CD8-positive, alpha-beta T cell (primary cell): ENCODE measurements at regions of chr5 and their contacts with region 1.

Region 1: GRCh38 chr5:41869739-41870626 is at the start of gene OXCT1:
- DNase-seq: peak; percentile 87 to 97 (median 93)
- ATAC-seq: peak; percentile 94
- H3K4me3 ChIP-seq: peak within 1 kb of the TSS; percentile 90 to 98
- H3K4me3 Mint-ChIP-seq: peak within 1 kb of the TSS; percentile 92
- H3K27ac ChIP-seq: peak within 1 kb of the TSS; percentile 87 to 90
- H3K27ac Mint-ChIP-seq: peak within 1 kb of the TSS; percentile 98
- H3K4me1 ChIP-seq: peaks cover 24% of the 10 kb centered on the region
- H3K4me1 Mint-ChIP-seq: peaks cover 48% of the 10 kb centered on the region
- H3K27me3 ChIP-seq: no peaks in the 10 kb centered on the region
- H3K27me3 Mint-ChIP-seq: no peaks in the 10 kb centered on the region
- CTCF ChIP-seq: no peak
- total RNA-seq, gene OXCT1: 16.1 to 19.8 TPM

Region 2: GRCh38 chr5:41896230-41896629 is 26.2 kb after region 1 on chr5:
- CTCF ChIA-PET with region 1: no interaction called
- POLR2A ChIA-PET with region 1: no interaction called
- intact Hi-C with region 1: no loop called
- DNase-seq: no peak
- ATAC-seq: no peak
- H3K4me3 ChIP-seq: no peak overlapping the region
- H3K4me3 Mint-ChIP-seq: no peak overlapping the region
- H3K27ac ChIP-seq: no peak overlapping the region
- H3K27ac Mint-ChIP-seq: no peak overlapping the region
- H3K4me1 ChIP-seq: no peaks in the 10 kb centered on the region
- H3K4me1 Mint-ChIP-seq: peaks cover 2% of the 10 kb centered on the region
- H3K27me3 ChIP-seq: no peaks in the 10 kb centered on the region
- H3K27me3 Mint-ChIP-seq: peaks cover 17% of the 10 kb centered on the region
- CTCF ChIP-seq: no peak

Region 3: DNA sequence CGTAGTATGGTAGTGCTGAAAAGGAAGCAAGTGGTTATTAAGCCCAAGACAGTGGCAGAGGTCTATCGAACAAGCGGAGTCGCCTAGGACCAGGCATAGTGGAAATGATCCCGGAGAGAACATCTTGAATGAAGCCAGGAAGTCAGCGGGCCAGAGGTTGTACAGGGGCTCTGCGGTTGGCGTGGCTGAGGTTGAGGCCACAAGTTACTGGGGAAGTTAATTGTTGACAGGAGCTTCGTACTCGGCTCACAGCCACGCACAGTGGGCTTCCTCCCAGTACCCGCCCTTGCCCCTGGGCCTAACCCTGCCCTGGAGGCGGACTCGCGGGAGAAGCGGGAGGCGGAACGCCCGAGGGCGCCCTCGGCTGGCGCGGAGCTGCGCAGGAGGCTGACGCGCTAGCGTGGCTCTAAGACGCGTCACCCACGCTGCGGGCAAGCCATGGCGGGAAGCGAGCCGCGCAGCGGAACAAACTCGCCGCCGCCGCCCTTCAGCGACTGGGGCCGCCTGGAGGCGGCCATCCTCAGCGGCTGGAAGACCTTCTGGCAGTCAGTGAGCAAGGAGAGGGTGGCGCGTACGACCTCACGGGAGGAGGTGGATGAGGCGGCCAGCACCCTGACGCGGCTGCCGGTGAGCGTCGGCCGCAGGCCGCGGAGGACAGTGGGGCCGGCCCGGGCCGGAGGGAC is 55.0 kb after region 1 on chr5 and contains the start of gene FBXO4:
- CTCF ChIA-PET with region 1: interaction called, 3 read pairs
- POLR2A ChIA-PET with region 1: interaction called, 8 read pairs
- intact Hi-C with region 1: loop called (anchors 1 kb)
- DNase-seq: peak; percentile 79 to 96 (median 88)
- ATAC-seq: peak; percentile 96
- H3K4me3 ChIP-seq: peak within 1 kb of the TSS; percentile 79 to 87
- H3K4me3 Mint-ChIP-seq: peak within 1 kb of the TSS; percentile 87
- H3K27ac ChIP-seq: peak within 1 kb of the TSS; percentile 91 to 98
- H3K27ac Mint-ChIP-seq: peak within 1 kb of the TSS; percentile 99
- H3K4me1 ChIP-seq: peaks cover 16% of the 10 kb centered on the region
- H3K4me1 Mint-ChIP-seq: peaks cover 28% of the 10 kb centered on the region
- H3K27me3 ChIP-seq: no peaks in the 10 kb centered on the region
- H3K27me3 Mint-ChIP-seq: no peaks in the 10 kb centered on the region
- CTCF ChIP-seq: peak; percentile 57
- total RNA-seq, gene FBXO4: 4.4 to 4.7 TPM

Region 4: DNA sequence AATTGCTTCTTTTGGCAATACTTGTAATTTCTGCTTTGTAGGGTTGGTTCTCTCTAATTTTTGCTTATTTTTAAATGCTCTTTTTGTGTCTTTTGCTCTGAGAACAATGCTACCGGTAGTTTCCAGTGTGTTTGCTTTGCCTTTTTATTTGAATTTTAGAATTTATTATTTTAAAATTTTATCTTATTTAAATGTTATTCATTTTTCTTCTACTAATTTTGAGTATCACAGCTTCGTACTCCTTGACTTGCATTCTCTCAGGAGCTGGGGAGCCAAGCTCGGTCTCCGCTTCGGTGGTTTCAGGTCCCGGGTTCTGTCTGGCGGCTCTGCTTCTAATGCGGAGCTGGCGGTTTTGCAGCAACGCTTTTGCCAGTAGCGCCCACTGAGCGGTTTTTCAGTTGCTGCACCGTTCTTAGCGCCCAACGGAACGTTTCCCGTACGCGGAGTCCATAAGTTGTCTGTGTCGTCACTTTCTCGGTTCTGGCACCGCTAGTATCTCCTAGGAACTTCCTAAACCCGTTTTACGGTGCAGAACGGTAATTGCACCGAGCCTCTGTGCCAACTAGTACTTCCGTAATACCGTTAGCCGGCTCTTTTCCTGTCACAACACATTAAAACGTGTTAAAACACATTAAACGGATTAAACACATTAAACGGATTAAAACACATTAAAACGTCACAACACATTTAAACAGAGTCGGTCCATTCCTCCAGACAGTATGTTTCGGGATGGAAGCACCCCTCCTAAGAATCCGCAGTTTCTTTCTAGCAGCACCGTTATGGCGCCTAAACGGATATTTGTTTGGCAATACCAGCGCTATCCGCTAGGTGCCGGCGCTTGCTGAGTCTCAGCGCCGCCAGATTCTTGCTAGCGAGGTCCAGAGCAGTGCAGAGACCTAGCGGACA is 1124.5 kb after region 1 on chr5:
- CTCF ChIA-PET with region 1: no interaction called
- POLR2A ChIA-PET with region 1: no interaction called
- intact Hi-C with region 1: loop called in 1 of 2 experiments (anchors 2 kb)
- DNase-seq: peak; percentile 75 to 94 (median 88)
- ATAC-seq: peak; percentile 63
- H3K4me3 ChIP-seq: peak overlapping the region; percentile 78 to 92
- H3K4me3 Mint-ChIP-seq: peak overlapping the region; percentile 99
- H3K27ac ChIP-seq: peak overlapping the region; percentile 97
- H3K27ac Mint-ChIP-seq: peak overlapping the region; percentile 100
- H3K4me1 ChIP-seq: peaks cover 23% of the 10 kb centered on the region
- H3K4me1 Mint-ChIP-seq: peaks cover 41% of the 10 kb centered on the region
- H3K27me3 ChIP-seq: no peaks in the 10 kb centered on the region
- H3K27me3 Mint-ChIP-seq: no peaks in the 10 kb centered on the region
- CTCF ChIP-seq: peak; percentile 93